ENCODE measurements at regions of chr3 and their contacts with region 1.

Region 1: DNA sequence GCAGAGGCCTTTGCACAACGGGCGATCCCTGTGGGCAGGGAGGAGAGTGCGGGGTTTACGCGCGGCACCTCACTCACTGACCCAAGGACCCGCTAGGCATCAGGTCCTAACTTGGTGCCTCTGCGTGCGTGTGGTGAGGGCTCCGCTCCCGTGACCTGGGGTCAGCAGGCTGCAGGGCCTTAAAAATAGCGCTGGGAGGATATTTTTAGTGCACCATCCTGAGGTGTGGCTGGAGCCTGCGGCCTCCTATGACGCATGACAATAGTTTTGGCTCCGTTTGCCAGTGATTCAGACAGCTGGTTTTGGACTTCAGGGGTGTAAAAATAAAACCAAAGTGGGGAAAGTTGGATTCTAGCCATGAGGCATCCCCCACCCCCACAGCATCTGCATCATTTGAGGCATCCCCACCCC is 139.0 kb downstream of the FAM43A start:
- DNase-seq: no peak
- H3K4me3 ChIP-seq: no peak overlapping the region
- H3K27ac ChIP-seq: no peak overlapping the region
- H3K4me1 ChIP-seq: no peaks in the 10 kb centered on the region
- H3K27me3 ChIP-seq: no peaks in the 10 kb centered on the region
- CTCF ChIP-seq: no peak
- POLR2A ChIP-seq: no peak

Region 2: GRCh38 chr3:193060748-193061546 is 1763.8 kb before region 1 on chr3:
- CTCF ChIA-PET with region 1: no interaction called
- POLR2A ChIA-PET with region 1: no interaction called
- dilution Hi-C with region 1: no loop called
- intact Hi-C with region 1: loop called (anchors 10 kb)
- DNase-seq: no peak
- H3K4me3 ChIP-seq: no peak overlapping the region
- H3K27ac ChIP-seq: no peak overlapping the region
- H3K4me1 ChIP-seq: no peaks in the 10 kb centered on the region
- H3K27me3 ChIP-seq: no peaks in the 10 kb centered on the region
- CTCF ChIP-seq: no peak
- POLR2A ChIP-seq: no peak

Region 3: DNA sequence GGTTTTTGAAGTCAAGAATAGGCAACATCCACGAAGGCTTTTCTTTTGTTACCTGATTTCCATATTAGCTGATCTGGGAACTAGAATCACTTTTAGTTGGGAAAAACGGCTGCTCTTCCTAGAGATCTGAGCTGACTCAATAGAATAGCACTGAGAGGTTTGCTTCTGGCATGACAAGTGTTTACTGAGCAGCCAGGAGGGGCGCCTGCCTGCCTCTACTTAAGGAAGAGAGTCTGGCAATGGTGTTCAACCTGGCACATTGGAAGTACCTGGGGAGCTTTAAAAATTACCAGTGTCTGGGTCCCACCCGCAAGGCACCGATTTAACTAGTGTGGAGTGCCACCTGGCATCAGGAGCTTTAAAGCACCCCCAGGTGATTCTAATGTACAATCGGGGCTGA is 104.7 kb before region 1 on chr3:
- CTCF ChIA-PET with region 1: no interaction called
- POLR2A ChIA-PET with region 1: no interaction called
- dilution Hi-C with region 1: no loop called
- intact Hi-C with region 1: no loop called
- DNase-seq: no peak
- H3K4me3 ChIP-seq: no peak overlapping the region
- H3K27ac ChIP-seq: no peak overlapping the region
- H3K4me1 ChIP-seq: peaks cover 10% of the 10 kb centered on the region
- H3K27me3 ChIP-seq: no peaks in the 10 kb centered on the region
- CTCF ChIP-seq: no peak
- POLR2A ChIP-seq: no peak

Measured in endothelial cell of umbilical vein (primary cell).